ENCODE measurements at regions of chr3 and their contacts with region 1.

Region 1: GRCh38 chr3:47989981-47990440 is 26.2 kb downstream of the MAP4 start:
- DNase-seq: peak in 1 of 2 donors; percentile 88
- H3K4me3 ChIP-seq: no peak overlapping the region
- H3K27ac ChIP-seq: peak overlapping the region; percentile 18
- H3K4me1 ChIP-seq: peaks cover 14% of the 10 kb centered on the region
- H3K27me3 ChIP-seq: no peaks in the 10 kb centered on the region
- CTCF ChIP-seq: peak; percentile 83 to 93 (median 93)
- POLR2A ChIP-seq: no peak

Region 2: DNA sequence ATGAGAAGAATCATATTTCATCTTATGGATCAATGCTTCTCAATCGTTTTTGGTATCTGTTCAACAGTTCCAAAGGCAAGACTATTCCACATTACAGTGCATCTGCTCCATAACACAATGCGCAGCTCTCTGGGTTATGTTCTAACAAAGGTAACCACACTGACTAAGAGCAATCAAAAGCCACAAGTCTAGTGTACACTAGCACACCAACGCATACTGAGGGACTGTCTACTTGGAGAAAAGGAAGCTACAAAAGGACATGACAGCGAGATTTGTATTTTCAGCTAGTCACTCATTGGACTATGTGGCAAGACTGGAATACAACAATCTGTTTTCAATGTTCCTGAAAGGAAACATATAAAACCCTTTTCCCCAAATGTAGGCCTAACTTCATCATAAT is 861.9 kb before region 1 on chr3:
- intact Hi-C with region 1: no loop called
- DNase-seq: no peak
- H3K4me3 ChIP-seq: no peak overlapping the region
- H3K27ac ChIP-seq: no peak overlapping the region
- H3K4me1 ChIP-seq: peaks cover 33% of the 10 kb centered on the region
- H3K27me3 ChIP-seq: no peaks in the 10 kb centered on the region
- CTCF ChIP-seq: no peak
- POLR2A ChIP-seq: no peak

Region 3: DNA sequence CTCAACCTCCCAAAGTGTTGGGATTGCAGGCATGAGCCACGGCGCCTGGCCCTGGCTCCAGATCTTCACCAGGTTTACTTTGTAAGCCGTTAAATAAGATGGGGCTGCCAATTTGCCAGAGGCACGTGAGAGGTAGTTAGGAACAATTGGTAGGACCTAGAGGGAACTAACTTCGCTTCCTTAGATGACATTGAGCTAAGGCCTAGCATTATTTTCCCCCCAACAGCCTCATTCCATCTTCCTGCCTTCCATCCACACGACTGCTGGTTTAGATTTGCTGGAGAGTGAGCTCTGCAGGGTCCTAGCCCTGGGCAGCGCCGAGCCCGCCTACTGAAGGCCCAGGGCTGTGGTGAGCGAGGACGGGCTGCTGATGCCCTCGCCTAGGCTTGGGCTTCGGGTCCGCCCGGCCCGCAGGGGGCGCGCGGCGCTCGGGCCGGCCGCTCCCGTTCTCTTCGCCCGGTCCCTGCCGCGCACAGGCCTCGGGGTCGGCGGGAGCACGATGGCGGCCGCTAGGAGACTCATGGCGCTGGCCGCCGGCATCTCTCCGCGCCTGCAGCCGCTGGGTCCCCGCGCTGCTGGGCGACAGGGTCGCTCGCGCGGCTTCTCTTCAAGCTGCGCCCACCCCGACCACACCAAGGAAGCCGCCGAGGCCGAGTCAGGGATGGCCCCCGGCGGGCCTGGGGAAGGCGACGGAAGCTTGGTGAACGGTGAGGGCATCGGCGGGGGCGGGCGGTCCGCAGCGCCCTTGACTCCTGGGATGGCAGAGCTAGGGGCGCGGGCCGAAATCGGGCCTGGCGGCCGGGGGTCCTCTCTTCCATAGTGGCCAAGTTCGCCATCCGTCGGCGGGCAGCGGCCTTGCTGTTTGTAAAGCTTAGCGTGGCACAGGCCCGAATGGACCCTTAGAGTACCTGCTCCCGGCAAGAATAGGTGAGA is 165.2 kb before region 1 on chr3:
- intact Hi-C with region 1: loop called (anchors 10 kb)
- DNase-seq: no peak
- H3K4me3 ChIP-seq: peak overlapping the region; percentile 64 to 90
- H3K27ac ChIP-seq: peak overlapping the region; percentile 89
- H3K4me1 ChIP-seq: peaks cover 27% of the 10 kb centered on the region
- H3K27me3 ChIP-seq: no peaks in the 10 kb centered on the region
- CTCF ChIP-seq: peak; percentile 59 to 87 (median 74)
- POLR2A ChIP-seq: no peak

Region 4: DNA sequence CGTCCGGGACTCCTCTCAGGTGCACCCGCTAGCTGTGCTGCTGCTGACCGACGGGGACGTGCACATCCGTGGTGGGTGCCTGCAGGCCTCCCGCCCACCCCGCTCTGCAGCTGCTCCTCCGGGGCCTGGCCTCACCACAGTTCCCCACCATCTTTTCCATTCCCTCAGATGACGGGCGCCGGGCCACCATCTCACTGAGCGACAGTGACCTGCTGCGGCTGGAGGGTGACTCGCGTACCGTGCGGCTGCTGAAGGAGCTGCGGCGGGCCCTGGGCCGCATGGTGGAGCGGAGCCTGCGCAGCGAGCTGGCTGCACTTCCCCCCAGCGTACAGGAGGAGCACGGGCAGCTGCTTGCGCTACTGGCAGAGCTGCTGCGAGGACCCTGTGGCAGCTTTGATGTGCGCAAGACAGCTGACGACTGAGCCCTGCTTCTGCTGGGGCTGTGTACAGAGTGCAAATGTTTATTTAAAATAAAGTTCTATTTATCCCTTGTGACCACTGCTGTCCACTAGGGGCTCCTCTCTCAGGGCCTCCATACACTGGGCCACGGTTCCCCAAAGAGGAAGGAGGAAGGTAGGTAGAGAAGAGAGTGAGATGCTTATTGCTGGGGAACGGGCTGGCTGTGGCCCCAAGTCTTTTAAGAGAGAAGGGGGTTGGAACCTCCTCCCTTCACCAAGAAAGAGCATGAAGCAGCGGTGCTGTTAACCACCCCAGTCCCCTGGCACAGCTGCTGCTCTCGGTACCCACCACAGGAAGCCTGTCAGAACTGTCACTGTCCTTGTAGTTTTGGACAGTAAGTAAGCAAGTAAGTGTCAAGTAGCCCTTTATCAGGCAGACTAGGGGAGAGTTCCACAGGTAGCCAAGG is 140.1 kb before region 1 on chr3:
- intact Hi-C with region 1: loop called (anchors 10 kb)
- DNase-seq: no peak
- H3K4me3 ChIP-seq: no peak overlapping the region
- H3K27ac ChIP-seq: no peak overlapping the region
- H3K4me1 ChIP-seq: no peaks in the 10 kb centered on the region
- H3K27me3 ChIP-seq: no peaks in the 10 kb centered on the region
- CTCF ChIP-seq: no peak
- POLR2A ChIP-seq: no peak

Region 5: GRCh38 chr3:47974974-47975470 is 15.0 kb before region 1 on chr3:
- intact Hi-C with region 1: loop called (anchors 1 kb)
- DNase-seq: no peak
- H3K4me3 ChIP-seq: no peak overlapping the region
- H3K27ac ChIP-seq: no peak overlapping the region
- H3K4me1 ChIP-seq: peaks cover 5% of the 10 kb centered on the region
- H3K27me3 ChIP-seq: no peaks in the 10 kb centered on the region
- CTCF ChIP-seq: no peak
- POLR2A ChIP-seq: no peak

Region 6: DNA sequence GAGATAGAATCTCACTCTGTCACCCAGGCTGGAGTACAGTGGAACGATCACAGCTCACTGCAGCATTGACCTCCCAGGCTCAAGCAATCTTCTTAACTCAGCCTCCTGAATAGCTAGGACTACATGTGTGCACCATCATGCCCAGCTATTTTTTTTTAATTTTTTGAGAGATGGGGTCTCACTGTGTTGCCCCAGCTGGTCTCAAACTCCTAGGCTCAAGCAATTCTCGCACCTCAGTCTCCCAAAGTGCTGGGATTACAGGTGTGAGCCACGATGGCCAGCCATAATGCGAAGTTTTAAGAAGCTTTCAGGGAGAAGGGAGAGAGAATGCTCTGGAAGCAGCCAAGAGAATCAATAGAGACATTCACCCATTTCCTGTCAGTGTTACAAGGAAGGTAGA is 814.9 kb after region 1 on chr3:
- intact Hi-C with region 1: loop called (anchors 5 kb)
- DNase-seq: no peak
- H3K4me3 ChIP-seq: no peak overlapping the region
- H3K27ac ChIP-seq: no peak overlapping the region
- H3K4me1 ChIP-seq: no peaks in the 10 kb centered on the region
- H3K27me3 ChIP-seq: no peaks in the 10 kb centered on the region
- CTCF ChIP-seq: no peak
- POLR2A ChIP-seq: no peak